Right ventricle myocardium superior (tissue), 1 donor: ENCODE measurements at regions of chr4 and their contacts with region 1.

Region 1: GRCh38 chr4:77240469-77241066 is 83.6 kb downstream of the CCNG2 start:
- DNase-seq: peak; percentile 56
- ATAC-seq: peak; percentile 76

Region 2: DNA sequence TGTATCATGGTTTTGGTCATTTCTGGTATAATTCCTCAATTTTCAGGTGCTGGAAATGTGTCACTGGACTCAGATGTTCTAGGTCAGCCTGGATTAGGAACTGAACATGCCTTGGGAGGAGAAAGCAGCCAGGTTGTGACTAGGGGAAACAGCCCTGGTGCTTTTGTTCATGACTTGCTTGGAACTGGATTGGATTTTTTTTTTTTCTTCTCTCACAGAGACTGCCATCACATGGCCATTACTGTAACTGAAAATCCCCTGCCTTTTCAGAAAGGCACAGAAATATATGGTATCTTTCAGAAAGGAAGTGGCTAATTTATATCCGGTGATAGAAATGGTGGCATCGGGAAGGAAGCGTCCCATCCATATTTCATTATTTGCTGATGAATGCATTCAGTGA is 256.4 kb before region 1 on chr4:
- intact Hi-C with region 1: no loop called
- DNase-seq: no peak
- ATAC-seq: no peak

Region 3: DNA sequence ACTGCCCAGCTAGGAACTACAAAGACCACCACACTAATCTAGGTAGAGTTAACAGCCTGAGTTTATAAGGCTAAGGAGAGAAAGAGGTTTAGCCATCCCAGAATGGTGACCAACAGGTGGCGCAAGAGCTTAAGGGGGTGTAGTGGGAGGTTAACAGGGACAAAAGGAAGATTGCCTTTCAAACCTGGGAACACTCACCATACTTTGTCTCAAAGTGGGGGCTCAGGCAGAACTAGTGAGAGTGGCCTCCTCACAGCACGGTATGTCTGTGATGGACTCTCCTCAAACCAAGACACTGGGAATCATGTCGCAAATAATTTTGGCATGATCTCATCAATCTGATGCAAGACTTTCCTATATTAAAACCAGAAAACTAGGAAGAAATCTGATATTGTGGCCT is 188.2 kb before region 1 on chr4:
- intact Hi-C with region 1: no loop called
- DNase-seq: no peak
- ATAC-seq: peak; percentile 47

Region 4: GRCh38 chr4:77110730-77111129 is 129.8 kb before region 1 on chr4:
- intact Hi-C with region 1: no loop called
- DNase-seq: no peak
- ATAC-seq: no peak

Region 5: DNA sequence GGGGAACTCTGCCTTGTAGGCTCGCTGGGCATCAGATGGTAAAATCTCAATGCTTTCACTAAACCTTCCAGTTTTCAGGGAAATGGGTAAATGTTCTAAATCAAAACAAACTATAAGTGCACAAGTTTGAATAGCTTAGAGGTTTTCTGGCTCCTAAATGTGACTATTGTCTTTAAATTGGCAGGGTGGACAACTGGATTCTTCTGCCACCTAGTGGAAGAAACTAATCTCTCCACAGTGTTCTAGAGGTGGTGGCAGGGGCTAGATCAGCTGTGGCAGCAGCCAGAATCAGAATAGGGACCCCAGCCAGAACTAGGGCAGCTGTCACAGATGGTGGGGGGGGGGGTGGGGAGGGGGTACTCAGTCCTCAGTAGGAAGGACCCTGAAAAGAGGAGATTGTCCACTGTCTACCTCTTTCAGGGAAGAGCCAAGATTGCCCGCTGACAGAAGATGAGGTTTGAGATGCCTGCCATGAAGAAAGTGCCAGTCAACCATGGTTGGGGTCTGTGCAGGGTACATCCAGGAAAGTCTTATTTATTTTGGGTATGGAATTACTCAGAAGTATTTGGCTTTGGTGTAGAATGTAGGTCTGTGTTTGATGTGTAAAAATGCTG is 117.9 kb after region 1 on chr4:
- intact Hi-C with region 1: loop called (anchors 5 kb)
- DNase-seq: no peak
- ATAC-seq: peak; percentile 74

Region 6: GRCh38 chr4:77433418-77433733 is 192.8 kb after region 1 on chr4:
- intact Hi-C with region 1: loop called (anchors 10 kb)
- DNase-seq: no peak
- ATAC-seq: peak; percentile 89